ENCODE measurements at regions of chr18 and their contacts with region 1.

Region 1: GRCh38 chr18:36284671-36285295 is 12.7 kb upstream of the FHOD3 start:
- DNase-seq: peak; percentile 78

Region 2: DNA sequence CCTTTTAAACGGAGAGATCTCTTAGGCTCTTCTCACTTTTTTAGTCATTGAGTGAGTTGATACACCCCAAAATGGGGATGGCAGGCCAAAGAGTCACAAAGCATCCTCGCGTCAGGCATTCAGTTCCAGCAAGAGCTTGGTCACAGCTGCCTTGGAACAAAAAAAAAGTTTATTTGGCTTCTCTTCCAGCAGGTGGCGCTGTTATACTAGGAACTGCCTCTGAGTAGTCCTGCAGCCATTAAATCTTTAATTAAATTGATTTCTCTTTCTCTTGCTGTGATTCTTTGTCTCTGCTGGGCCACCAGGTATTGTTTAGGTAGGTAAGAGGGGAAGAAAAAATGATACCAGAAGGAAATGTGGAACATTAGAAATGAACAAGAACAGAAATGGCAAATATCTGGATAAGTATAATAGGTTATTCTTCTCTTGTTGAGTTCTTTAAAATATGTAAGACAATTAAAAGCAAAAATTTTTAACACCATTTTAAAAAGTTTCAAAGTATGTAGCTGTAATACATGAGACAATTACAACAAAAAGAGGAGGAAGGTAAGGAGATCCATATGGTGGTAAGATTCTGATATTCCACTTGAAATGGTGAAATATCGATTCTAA is 528.2 kb before region 1 on chr18:
- CTCF ChIA-PET with region 1: interaction called, 13 read pairs
- POLR2A ChIA-PET with region 1: no interaction called
- DNase-seq: peak; percentile 87

Region 3: GRCh38 chr18:36017232-36017631 is 267.6 kb before region 1 on chr18:
- CTCF ChIA-PET with region 1: interaction called, 13 read pairs
- POLR2A ChIA-PET with region 1: no interaction called
- DNase-seq: no peak

Region 4: GRCh38 chr18:36095936-36096519 is 188.8 kb before region 1 on chr18:
- CTCF ChIA-PET with region 1: interaction called, 46 read pairs
- POLR2A ChIA-PET with region 1: no interaction called
- DNase-seq: peak; percentile 49

Measured in HEK293T (cell line).